K562 (cell line): ENCODE measurements at regions of chr6 and their contacts with region 1.

Region 1: GRCh38 chr6:170516783-170517616 is 36.1 kb downstream of the PSMB1 start:
- DNase-seq: peak in 2 of 4 experiments; percentile 56 to 70
- ATAC-seq: peak; percentile 99
- H3K4me3 ChIP-seq: no peak overlapping the region
- H3K27ac ChIP-seq: no peak overlapping the region
- H3K4me1 ChIP-seq: no peaks in the 10 kb centered on the region
- H3K27me3 ChIP-seq: peaks cover 3 to 4% of the 10 kb centered on the region in 2 experiments; a peak in 3 of 5 replicates
- CTCF ChIP-seq: peak; percentile 81 to 86 (median 85)
- EP300 ChIP-seq: no peak
- POLR2A ChIP-seq: no peak
- RAD21 ChIP-seq: peak; percentile 77 to 90

Region 2: GRCh38 chr6:168895102-168895812 is 1621.7 kb before region 1 on chr6:
- CTCF ChIA-PET with region 1: no interaction called
- POLR2A ChIA-PET with region 1: no interaction called
- in situ Hi-C with region 1: loop called (anchors 10 kb)
- intact Hi-C with region 1: loop called (anchors 10 kb)
- DNase-seq: peak; percentile 81 to 88 (median 86)
- ATAC-seq: peak; percentile 99
- H3K4me3 ChIP-seq: no peak overlapping the region
- H3K27ac ChIP-seq: no peak overlapping the region
- H3K4me1 ChIP-seq: no peaks in the 10 kb centered on the region
- H3K27me3 ChIP-seq: peaks cover 13 to 47% of the 10 kb centered on the region in 2 experiments; a peak in 4 of 5 replicates
- CTCF ChIP-seq: peak; percentile 92 to 96 (median 95)
- EP300 ChIP-seq: 0 out of 2 replicates have a peak, but pooled peaks have one; percentile 24
- POLR2A ChIP-seq: no peak
- RAD21 ChIP-seq: peak; percentile 91 to 92

Region 3: GRCh38 chr6:169831450-169832246 is 685.4 kb before region 1 on chr6:
- CTCF ChIA-PET with region 1: interaction called, 7 read pairs
- POLR2A ChIA-PET with region 1: no interaction called
- in situ Hi-C with region 1: loop called (anchors 10 kb)
- intact Hi-C with region 1: loop called (anchors 1 kb)
- DNase-seq: peak; percentile 82 to 90 (median 85)
- ATAC-seq: peak; percentile 98
- H3K4me3 ChIP-seq: no peak overlapping the region
- H3K27ac ChIP-seq: no peak overlapping the region
- H3K4me1 ChIP-seq: peaks cover 0 to 3% of the 10 kb centered on the region in 2 experiments; a peak in 1 of 5 replicates
- H3K27me3 ChIP-seq: peaks cover 15 to 36% of the 10 kb centered on the region in 2 experiments; a peak in 3 of 5 replicates
- CTCF ChIP-seq: peak; percentile 89 to 98 (median 94)
- EP300 ChIP-seq: no peak
- POLR2A ChIP-seq: no peak
- RAD21 ChIP-seq: peak; percentile 85 to 92

Region 4: GRCh38 chr6:170224694-170225660 is 292.0 kb before region 1 on chr6:
- CTCF ChIA-PET with region 1: no interaction called
- POLR2A ChIA-PET with region 1: no interaction called
- in situ Hi-C with region 1: no loop called
- intact Hi-C with region 1: loop called (anchors 10 kb)
- DNase-seq: no peak
- ATAC-seq: no peak
- H3K4me3 ChIP-seq: no peak overlapping the region
- H3K27ac ChIP-seq: no peak overlapping the region
- H3K4me1 ChIP-seq: peaks cover 0 to 11% of the 10 kb centered on the region in 2 experiments; a peak in 1 of 5 replicates
- H3K27me3 ChIP-seq: peaks cover 71 to 85% of the 10 kb centered on the region in 2 experiments
- CTCF ChIP-seq: no peak
- EP300 ChIP-seq: no peak
- POLR2A ChIP-seq: no peak
- RAD21 ChIP-seq: no peak

Region 5: DNA sequence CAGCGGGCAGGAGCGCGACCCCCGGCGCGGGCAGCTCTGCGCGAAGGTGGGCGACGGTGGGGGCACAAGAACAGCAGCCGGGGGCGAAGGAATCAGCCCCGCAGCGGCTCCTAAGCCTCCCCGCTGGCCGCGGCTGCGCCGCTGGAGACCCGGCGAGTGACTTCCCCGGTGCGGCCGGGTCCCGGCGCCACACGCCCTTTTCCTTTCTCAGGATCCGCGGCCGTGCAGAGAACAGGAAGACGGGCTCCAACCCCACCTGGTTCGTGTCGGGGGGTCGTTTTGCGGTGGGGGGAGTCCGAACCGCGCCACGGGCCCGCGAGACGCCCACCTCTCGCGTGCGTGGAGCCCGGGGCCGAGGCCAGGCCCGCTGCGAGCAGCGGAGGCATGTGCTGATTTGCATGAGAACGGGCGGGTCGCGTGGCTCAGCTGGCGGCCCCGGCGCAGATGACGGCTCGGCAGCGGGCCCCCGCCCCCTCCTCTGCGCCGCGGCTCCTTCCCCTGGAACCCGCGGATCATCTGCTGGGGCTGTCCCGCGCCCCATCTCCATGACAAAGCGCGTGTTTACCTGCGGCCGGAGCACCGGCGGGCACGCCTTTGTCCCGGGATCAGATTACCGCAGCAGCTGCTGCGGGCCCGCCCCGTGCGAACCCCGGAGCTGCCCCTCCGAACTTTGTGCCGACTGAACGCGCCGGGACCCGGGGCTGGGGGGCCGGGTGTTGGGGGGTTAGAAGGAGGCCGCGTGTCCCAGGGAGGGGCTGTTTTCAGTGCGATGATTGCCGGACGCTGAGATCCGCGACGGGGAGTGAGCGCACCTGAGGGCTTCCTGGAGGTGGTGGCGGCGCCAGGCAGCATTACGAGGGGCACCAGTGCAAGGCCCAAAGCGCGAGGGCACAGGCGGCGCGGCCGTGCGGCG is 221.2 kb before region 1 on chr6:
- CTCF ChIA-PET with region 1: interaction called, 3 read pairs
- POLR2A ChIA-PET with region 1: no interaction called
- in situ Hi-C with region 1: no loop called
- intact Hi-C with region 1: loop called (anchors 10 kb)
- DNase-seq: peak; percentile 38 to 68 (median 56)
- ATAC-seq: peak; percentile 77
- H3K4me3 ChIP-seq: peak overlapping the region; percentile 36
- H3K27ac ChIP-seq: no peak overlapping the region
- H3K4me1 ChIP-seq: peaks cover 0 to 34% of the 10 kb centered on the region in 2 experiments; a peak in 3 of 5 replicates
- H3K27me3 ChIP-seq: peaks cover 69 to 72% of the 10 kb centered on the region in 2 experiments
- CTCF ChIP-seq: no peak
- EP300 ChIP-seq: no peak
- POLR2A ChIP-seq: no peak
- RAD21 ChIP-seq: no peak

Region 6: DNA sequence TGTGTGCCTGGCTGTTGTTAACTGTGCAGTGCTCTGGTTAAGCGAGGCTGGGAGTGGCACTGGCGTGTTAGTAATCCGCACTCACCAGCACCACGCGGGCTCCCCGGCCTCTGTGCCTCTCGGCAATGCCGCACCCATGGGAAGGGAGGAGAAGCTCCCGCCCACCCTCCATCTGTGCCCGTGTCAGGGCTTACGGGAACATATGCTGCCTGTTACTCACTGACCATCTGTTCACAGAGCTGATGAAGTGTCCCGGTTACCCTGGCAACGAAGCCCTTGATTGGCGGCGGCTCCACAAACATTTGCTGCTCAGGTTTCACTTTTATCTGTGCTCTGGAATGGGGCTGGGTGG is 78.6 kb before region 1 on chr6:
- CTCF ChIA-PET with region 1: no interaction called
- POLR2A ChIA-PET with region 1: no interaction called
- in situ Hi-C with region 1: no loop called
- intact Hi-C with region 1: loop called (anchors 5 kb)
- DNase-seq: peak; percentile 60 to 75 (median 66)
- ATAC-seq: peak; percentile 71
- H3K4me3 ChIP-seq: no peak overlapping the region
- H3K27ac ChIP-seq: no peak overlapping the region
- H3K4me1 ChIP-seq: peaks cover 0 to 11% of the 10 kb centered on the region in 2 experiments; a peak in 2 of 5 replicates
- H3K27me3 ChIP-seq: peaks cover 54 to 79% of the 10 kb centered on the region in 2 experiments
- CTCF ChIP-seq: no peak
- EP300 ChIP-seq: no peak
- POLR2A ChIP-seq: no peak
- RAD21 ChIP-seq: no peak

Region 7: DNA sequence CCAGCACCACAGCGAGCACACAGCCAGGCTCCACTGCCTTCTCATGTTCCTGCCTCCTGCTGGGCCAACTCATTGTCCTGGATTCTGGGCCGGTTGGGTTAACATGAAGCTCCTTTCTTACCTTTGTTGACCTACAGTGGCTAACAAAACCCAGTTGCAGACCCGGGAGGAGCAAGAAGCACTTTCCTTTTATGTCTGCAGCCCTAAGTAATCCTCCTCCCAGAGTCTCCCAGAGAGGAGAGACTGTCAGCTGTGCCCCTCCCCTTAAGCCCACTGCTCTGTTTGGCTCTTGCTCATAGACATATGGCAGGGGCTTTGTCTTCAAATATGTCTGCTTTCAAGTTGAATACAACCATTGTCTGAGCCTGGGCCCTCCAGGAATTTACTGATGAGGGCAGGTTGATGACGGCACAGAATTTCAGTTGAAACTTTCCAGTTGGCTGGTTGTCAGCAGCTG is 19.1 kb before region 1 on chr6:
- CTCF ChIA-PET with region 1: no interaction called
- POLR2A ChIA-PET with region 1: no interaction called
- in situ Hi-C with region 1: no loop called
- intact Hi-C with region 1: no loop called
- DNase-seq: no peak
- ATAC-seq: no peak; the same call in 2 of the 3 replicates
- H3K4me3 ChIP-seq: no peak overlapping the region
- H3K27ac ChIP-seq: no peak overlapping the region
- H3K4me1 ChIP-seq: no peaks in the 10 kb centered on the region
- H3K27me3 ChIP-seq: peaks cover 22 to 71% of the 10 kb centered on the region in 2 experiments
- CTCF ChIP-seq: no peak
- EP300 ChIP-seq: no peak
- POLR2A ChIP-seq: no peak
- RAD21 ChIP-seq: no peak